BJ (cell line): ENCODE measurements at regions of chr3 and their contacts with region 1.

Region 1: DNA sequence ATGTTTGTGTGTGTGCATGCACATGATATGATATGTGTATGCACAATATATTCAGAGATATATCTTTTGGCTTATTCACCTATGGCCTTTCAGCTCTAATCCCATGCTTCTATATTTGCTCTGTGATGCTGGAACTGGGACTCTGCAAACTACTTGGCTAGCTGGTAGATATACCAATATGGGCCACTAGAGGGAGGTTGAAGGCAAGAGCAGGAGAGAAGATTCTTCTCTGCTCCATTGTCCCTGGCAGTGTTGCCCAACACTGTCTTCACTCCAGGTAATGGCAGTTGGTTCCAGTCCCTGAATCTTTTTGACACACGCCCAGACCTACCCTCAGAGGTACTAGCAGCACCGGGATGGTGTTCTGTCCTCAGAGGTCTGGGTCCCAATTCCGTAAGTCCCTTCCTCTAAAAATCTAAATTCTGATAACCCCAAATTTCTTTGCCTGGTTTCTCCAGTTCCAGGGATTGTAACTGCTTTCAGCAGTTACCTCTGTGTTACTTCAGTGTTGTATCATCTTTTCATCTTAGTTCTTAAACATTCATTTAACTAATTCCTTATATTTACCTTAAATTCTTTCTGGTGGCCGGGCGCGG is 44.7 kb downstream of the GTPBP8 start:
- DNase-seq: no peak
- H3K4me3 ChIP-seq: no peak overlapping the region
- H3K27me3 ChIP-seq: no peaks in the 10 kb centered on the region
- CTCF ChIP-seq: peak; percentile 93

Region 2: GRCh38 chr3:112582244-112582874 is 453.1 kb before region 1 on chr3:
- CTCF ChIA-PET with region 1: interaction called, 12 read pairs
- POLR2A ChIA-PET with region 1: no interaction called
- DNase-seq: no peak
- H3K4me3 ChIP-seq: no peak overlapping the region
- H3K27me3 ChIP-seq: no peaks in the 10 kb centered on the region
- CTCF ChIP-seq: peak; percentile 66

Region 3: DNA sequence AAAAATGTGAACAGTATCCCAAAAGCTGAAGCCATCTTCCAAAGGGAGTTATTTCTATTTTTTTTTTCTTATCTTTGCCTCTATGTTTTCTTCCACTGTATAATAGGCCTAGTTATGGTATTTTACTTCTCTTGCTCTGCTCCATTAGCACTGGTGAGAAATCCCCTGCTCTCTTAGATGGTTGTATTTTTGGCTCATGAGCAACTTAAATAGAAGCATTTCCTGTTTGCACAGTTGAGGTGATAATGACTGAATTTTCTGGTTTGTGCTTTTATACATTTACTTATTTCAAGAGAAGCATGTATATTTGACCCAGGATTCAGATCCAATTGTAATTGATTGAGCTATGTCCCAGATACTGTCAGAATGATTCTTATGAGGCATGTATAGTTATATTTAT is 127.2 kb before region 1 on chr3:
- CTCF ChIA-PET with region 1: no interaction called
- POLR2A ChIA-PET with region 1: no interaction called
- DNase-seq: no peak
- H3K4me3 ChIP-seq: no peak overlapping the region
- H3K27me3 ChIP-seq: no peaks in the 10 kb centered on the region; the same call in 1 of the 2 replicates
- CTCF ChIP-seq: no peak

Region 4: DNA sequence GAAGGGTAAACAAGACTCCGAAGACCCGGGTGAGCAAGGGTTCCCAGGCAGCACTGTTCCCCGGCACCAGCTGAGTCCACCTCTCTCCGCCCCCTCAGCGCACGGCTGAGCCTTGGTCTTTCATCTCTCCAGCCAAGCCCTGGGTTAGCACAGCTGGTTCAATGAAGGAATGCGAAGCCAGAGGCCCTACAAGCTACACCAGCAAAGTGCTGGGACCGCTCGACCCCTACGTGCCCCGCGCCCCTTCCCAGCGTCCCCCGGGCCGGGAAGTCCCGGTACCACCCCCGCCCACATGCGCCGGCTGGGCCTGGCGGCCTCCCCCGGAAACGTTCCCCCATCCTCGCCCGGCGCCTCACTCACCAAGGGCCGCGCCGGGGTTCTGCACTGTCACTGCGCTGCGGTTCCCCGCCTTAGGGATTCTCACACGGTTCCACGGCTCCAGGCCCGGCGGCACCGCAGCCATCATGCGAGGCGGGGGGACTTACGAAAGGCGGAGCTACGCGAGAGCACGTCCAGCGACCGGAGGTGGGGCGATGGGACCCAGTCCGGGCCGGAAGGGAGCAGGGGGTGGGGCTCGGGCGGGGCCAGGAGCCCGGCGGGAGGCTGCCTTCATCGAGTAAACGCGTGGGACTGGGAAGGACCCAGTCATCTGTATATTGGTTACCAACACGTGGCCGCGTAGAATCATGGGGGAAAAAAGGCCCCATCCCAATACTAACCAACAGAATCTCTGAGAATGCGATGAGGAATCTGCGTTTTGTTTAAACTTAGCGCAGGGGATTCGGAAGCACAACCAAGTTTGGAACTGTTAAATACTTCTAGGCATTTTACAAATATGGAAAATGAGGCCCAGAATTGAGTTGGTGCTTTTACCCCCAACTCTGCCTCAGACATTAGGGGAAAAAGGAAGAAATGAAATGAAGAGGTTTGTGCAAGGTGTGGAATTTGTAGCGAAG is 16.0 kb before region 1 on chr3:
- CTCF ChIA-PET with region 1: interaction called, 14 read pairs
- POLR2A ChIA-PET with region 1: no interaction called
- DNase-seq: peak; percentile 69
- H3K4me3 ChIP-seq: peak overlapping the region; percentile 65
- H3K27me3 ChIP-seq: no peaks in the 10 kb centered on the region
- CTCF ChIP-seq: no peak

Region 5: GRCh38 chr3:113051302-113051711 is 15.8 kb after region 1 on chr3:
- CTCF ChIA-PET with region 1: interaction called, 10 read pairs
- POLR2A ChIA-PET with region 1: no interaction called
- DNase-seq: no peak
- H3K4me3 ChIP-seq: no peak overlapping the region
- H3K27me3 ChIP-seq: 0 out of 2 replicates have a peak, but pooled peaks cover 2% of the 10 kb centered on the region
- CTCF ChIP-seq: peak; percentile 81

Region 6: GRCh38 chr3:113575206-113575605 is 539.7 kb after region 1 on chr3:
- CTCF ChIA-PET with region 1: interaction called, 10 read pairs
- POLR2A ChIA-PET with region 1: no interaction called
- DNase-seq: no peak
- H3K4me3 ChIP-seq: no peak overlapping the region
- H3K27me3 ChIP-seq: peaks cover 8% of the 10 kb centered on the region
- CTCF ChIP-seq: no peak